CD4-positive, alpha-beta memory T cell (primary cell): ENCODE measurements at regions of chr20 and their contacts with region 1.

Region 1: DNA sequence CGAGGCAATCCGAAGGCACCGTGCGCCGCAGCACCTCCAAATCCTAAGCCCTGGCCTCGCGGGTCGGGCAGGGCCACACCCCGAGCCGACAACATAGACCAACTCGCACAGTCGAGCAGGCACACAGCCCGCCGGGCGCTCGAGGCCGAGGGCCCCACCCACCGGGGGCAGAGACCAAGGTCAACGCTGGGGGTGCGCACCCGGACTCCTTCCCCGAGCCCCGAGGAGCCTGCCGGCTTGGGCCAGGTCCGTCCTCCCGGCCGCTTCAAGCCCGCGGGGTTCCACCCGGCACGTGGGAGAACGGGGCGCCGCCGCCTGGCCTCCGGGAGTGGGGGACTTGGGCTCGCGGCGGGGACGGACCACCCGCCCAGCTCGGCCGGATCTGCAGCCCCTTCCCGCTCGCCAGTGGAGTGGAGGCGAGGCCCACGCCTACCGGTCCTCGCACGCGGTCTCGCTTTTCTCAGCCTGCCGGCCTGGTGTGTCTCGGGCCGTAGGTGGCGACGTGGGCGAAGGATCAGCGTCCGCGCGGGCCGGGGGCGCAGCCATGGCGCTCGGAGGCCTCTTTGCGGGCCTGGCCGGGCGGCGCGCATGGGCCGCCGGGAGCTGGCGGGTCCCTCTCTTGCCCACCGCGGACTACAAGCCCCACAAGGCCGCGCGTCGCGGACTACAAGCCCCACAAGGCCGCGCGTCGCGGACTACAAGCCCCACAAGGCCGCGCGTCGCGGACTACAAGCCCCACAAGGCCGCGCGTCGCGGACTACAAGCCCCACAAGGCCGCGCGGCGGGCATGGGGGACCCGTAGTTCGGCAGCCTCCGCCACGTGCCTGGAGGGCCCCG is at the start of gene UCKL1:
- DNase-seq: peak; percentile 90 to 94 (median 93)
- H3K4me3 ChIP-seq: peak within 1 kb of the TSS; percentile 34 to 79
- H3K4me3 Mint-ChIP-seq: peak within 1 kb of the TSS; percentile 77 to 88 (median 86)
- H3K27ac ChIP-seq: peak within 1 kb of the TSS; percentile 87
- H3K27ac Mint-ChIP-seq: peak within 1 kb of the TSS; percentile 84 to 93 (median 87)
- H3K4me1 ChIP-seq: peaks cover 43% of the 10 kb centered on the region
- H3K4me1 Mint-ChIP-seq: peaks cover 10 to 47% (median 29%) of the 10 kb centered on the region in 4 donors
- H3K27me3 ChIP-seq: no peaks in the 10 kb centered on the region
- H3K27me3 Mint-ChIP-seq: no peaks in the 10 kb centered on the region
- total RNA-seq, gene UCKL1: 53.7 to 55.1 TPM

Region 2: DNA sequence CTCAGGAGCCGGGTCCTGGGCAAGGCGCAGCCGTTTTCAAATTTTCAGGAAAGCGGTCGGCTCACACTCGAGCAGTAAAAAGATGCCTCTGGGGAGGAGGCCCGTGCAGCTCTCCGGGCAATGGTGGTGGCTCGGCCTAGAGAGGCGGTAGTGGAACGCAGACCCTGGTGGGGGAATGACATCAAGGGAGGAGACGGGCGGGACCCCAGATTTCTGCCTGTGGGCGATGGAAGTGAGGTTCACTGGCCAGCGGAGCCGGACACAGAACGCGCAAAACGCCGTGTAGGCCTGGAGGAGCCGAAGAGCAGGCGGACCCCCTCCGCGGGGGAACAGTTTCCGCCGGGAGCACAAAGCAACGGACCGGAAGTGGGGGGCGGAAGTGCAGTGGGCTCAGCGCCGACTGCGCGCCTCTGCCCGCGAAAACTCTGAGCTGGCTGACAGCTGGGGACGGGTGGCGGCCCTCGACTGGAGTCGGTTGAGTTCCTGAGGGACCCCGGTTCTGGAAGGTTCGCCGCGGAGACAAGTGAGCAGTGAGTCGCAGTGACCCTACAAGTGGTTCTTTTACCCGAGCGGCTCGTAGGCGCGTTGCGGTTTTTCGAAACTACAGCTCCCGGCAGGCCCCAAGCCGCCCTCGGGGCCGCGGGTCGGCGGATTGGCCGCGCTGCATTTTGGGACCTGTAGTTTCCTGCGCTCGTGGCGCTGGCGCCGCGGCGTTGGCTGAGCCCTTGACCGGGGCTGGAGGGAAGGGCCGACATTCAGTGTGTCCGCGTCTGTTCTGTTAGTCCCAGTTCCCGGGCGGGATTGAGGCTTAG is 297.9 kb before region 1 on chr20 and contains the start of gene RTEL1:
- CTCF ChIA-PET with region 1: no interaction called
- POLR2A ChIA-PET with region 1: interaction called, 6 read pairs
- intact Hi-C with region 1: loop called (anchors 1 kb)
- DNase-seq: peak; percentile 86 to 93 (median 88)
- H3K4me3 ChIP-seq: peak within 1 kb of the TSS; percentile 91 to 97
- H3K4me3 Mint-ChIP-seq: peak within 1 kb of the TSS; percentile 92 to 98 (median 96)
- H3K27ac ChIP-seq: peak within 1 kb of the TSS; percentile 75
- H3K27ac Mint-ChIP-seq: peak within 1 kb of the TSS; percentile 94 to 98 (median 96)
- H3K4me1 ChIP-seq: peaks cover 42% of the 10 kb centered on the region
- H3K4me1 Mint-ChIP-seq: peaks cover 17 to 48% (median 24%) of the 10 kb centered on the region in 4 donors
- H3K27me3 ChIP-seq: no peaks in the 10 kb centered on the region
- H3K27me3 Mint-ChIP-seq: no peaks in the 10 kb centered on the region
- total RNA-seq, gene RTEL1: 30.9 to 36.0 TPM

Region 3: DNA sequence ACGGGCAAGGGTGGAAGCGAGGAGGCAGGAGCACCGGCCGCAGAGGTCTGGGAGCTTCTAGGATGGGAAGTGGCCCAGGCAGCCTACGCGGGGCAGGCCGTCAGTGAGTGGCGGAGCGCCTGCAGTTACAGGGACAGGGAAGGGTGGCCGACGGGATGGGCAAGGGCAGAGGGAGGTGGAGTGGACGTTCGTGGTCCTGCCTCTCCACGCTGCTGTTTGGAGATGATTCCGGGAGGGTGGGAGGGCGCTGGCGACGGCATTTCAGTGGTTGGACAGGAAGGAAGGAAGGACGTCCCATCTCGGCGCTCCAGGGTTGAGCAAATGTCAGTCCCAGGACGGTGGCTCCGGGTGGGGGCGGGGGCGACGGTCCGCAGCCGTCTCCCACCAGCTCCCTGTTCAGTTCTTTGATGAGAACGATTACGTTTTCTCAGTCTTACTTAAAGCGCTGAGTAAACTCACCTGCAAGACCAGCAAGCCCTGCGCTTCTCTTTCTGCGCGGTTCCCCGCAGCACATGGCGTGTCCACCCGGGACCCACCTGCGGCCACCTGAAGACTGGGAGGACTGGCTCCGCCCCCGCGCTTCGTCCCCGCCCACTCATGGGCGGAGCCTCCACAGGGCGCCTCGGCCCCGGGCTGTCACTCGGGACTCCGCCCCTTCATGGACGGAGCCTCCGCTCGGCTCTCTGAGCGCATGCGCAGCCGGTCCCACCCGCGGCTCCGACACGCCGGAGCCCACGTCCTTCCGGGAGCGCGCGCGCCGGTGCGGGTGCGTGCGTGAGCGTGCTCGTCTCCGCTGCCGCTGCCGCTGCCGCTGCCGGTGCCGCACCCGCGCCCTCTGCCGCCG is 61.5 kb before region 1 on chr20 and contains the start of gene DNAJC5:
- CTCF ChIA-PET with region 1: interaction called, 3 read pairs
- POLR2A ChIA-PET with region 1: interaction called, 31 read pairs
- intact Hi-C with region 1: loop called (anchors 1 kb)
- DNase-seq: peak; percentile 95 to 98 (median 98)
- H3K4me3 ChIP-seq: peak within 1 kb of the TSS; percentile 68 to 81
- H3K4me3 Mint-ChIP-seq: peak within 1 kb of the TSS; percentile 92 to 99 (median 94)
- H3K27ac ChIP-seq: peak within 1 kb of the TSS; percentile 66
- H3K27ac Mint-ChIP-seq: peak within 1 kb of the TSS; percentile 93 to 99 (median 97)
- H3K4me1 ChIP-seq: peaks cover 45% of the 10 kb centered on the region
- H3K4me1 Mint-ChIP-seq: peaks cover 28 to 48% (median 40%) of the 10 kb centered on the region in 4 donors
- H3K27me3 ChIP-seq: no peaks in the 10 kb centered on the region
- H3K27me3 Mint-ChIP-seq: no peaks in the 10 kb centered on the region
- total RNA-seq, gene DNAJC5: 53.3 to 54.4 TPM

Region 4: DNA sequence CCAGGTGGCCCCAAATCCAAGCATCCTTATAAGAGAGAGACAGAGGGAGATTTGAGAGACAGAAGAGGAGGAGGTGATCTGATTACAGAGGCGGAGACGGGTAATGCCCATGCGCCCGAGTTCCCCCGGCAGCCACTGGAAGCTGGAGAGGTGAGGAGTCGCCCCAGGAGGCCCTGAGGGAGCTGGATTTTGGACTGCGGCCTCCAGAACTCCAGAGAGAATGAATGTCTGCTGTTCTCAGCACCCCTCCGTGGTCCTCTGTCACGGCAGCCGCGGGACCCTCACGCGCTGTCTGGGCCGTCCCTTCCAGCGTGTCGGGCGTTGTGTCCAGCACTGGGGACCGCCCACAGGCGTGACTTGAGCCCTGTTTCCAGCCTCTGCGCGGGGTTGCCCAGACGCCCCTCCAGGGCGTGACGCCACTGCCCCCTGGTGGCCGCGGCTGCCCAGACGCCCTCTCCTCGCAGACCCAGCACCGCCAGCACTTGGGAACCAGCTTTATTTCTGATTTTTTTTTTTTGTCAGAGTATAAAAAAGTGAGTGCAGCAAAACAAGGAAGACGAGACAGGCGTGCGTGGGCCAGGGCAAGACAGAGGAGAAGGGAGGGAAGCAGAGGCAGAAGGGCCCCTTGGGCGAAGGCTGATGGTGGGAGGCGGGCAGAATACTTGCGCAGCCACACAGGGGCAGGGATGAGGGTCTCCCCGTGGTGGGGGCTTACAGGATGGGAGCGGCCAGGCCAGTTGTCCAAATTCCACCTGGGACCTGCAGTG is 17.8 kb after region 1 on chr20:
- CTCF ChIA-PET with region 1: no interaction called
- POLR2A ChIA-PET with region 1: interaction called, 27 read pairs
- intact Hi-C with region 1: loop called (anchors 2 kb)
- DNase-seq: peak; percentile 69 to 75 (median 71)
- H3K4me3 ChIP-seq: no peak overlapping the region
- H3K4me3 Mint-ChIP-seq: peak overlapping the region in 1 of 8 donors; percentile 43
- H3K27ac ChIP-seq: no peak overlapping the region
- H3K27ac Mint-ChIP-seq: peak overlapping the region in 6 of 7 donors; percentile 46 to 89 (median 71)
- H3K4me1 ChIP-seq: peaks cover 30% of the 10 kb centered on the region
- H3K4me1 Mint-ChIP-seq: peaks cover 22 to 55% (median 35%) of the 10 kb centered on the region in 4 donors
- H3K27me3 ChIP-seq: no peaks in the 10 kb centered on the region
- H3K27me3 Mint-ChIP-seq: no peaks in the 10 kb centered on the region

Region 5: GRCh38 chr20:64038565-64039292 is 82.7 kb after region 1 on chr20:
- CTCF ChIA-PET with region 1: no interaction called
- POLR2A ChIA-PET with region 1: interaction called, 3 read pairs
- intact Hi-C with region 1: loop called (anchors 1 kb)
- DNase-seq: peak; percentile 65 to 76 (median 71)
- H3K4me3 ChIP-seq: peak overlapping the region; percentile 29 to 72
- H3K4me3 Mint-ChIP-seq: peak overlapping the region; percentile 17 to 82 (median 57)
- H3K27ac ChIP-seq: peak overlapping the region; percentile 35
- H3K27ac Mint-ChIP-seq: peak overlapping the region in 2 of 7 donors; percentile 43 to 69
- H3K4me1 ChIP-seq: peaks cover 74% of the 10 kb centered on the region
- H3K4me1 Mint-ChIP-seq: peaks cover 13 to 63% (median 34%) of the 10 kb centered on the region in 4 donors
- H3K27me3 ChIP-seq: no peaks in the 10 kb centered on the region
- H3K27me3 Mint-ChIP-seq: no peaks in the 10 kb centered on the region